AG04450 (cell line): ENCODE measurements at regions of chr12 and their contacts with region 1.

Region 1: DNA sequence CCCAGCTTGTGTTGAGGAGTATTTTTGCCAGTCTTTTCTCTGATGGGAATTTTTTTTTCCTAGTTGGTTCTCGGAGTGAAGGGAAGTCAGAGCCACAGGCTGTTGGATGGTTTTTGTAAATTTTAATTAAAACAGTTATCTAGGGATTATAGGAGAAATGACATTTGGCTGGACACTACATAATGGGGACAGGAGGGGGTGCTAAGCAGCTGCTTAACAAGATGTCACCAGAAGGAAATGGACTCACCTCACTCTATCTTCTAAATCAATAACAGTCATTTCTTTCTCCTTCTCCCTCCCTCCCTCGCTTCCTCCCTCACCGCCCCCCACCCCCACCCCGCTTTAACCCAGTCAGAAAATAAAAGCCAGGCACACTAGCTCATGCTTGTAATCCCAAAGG is 93.4 kb upstream of the TMEM233 start:
- DNase-seq: no peak
- H3K4me3 ChIP-seq: no peak overlapping the region
- H3K27ac ChIP-seq: no peak overlapping the region
- H3K27me3 ChIP-seq: no peaks in the 10 kb centered on the region
- CTCF ChIP-seq: no peak

Region 2: DNA sequence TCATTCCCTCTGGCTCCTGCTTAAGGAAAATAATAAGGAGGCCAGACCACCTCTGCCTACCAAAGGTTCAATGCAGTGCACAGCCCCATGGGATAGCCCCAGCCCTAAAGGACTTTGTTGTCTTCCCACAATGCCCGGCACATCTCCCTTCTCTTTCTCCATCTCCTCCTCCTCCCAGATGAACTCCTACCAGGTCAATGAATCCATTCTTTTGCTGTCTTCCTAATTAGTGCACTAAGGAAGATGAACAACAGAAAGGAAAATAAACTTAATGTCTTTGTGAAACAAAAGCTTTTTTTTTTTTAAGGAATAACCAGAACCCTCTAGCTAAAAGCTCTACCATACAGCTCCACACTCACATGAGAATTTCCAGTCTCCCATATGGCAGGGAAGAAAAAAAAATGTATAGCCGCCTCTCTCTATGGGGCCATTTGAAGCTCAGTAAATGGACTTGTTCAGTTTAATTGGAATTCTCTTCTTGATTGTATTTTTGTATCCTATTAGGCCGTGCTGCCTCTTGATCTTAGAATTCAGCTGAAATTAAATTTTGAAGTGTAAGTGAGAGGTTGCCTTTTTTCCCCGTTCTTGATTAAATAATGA is 363.3 kb before region 1 on chr12:
- CTCF ChIA-PET with region 1: no interaction called
- POLR2A ChIA-PET with region 1: no interaction called
- DNase-seq: no peak
- H3K4me3 ChIP-seq: no peak overlapping the region
- H3K27ac ChIP-seq: no peak overlapping the region
- H3K27me3 ChIP-seq: no peaks in the 10 kb centered on the region
- CTCF ChIP-seq: no peak

Region 3: DNA sequence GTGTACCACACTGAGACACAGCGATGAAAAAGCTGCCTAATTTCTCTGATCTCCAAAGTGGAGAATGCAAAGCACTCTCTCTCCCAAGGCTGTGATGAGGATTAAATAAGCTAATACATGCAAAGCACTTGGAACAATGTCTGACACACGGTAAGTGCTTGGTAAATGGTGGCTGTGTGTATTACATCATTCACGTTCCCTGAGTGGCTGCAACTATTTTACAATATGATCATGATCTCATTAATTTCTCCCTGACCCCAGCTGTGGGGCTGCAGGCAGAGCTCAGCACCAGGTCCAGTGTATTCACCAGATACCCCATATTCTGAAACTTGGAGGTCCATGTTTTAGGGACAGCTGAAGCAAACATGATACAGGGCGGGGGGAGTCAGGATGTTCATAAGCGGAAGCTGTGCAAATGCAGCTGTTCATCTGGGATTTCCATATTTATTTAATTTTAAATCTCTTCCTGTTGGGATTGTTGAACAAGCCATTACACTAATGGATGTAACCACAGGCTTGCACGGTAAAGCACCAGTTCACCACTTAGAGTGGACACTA is 59.3 kb before region 1 on chr12:
- CTCF ChIA-PET with region 1: interaction called, 11 read pairs
- POLR2A ChIA-PET with region 1: no interaction called
- DNase-seq: no peak
- H3K4me3 ChIP-seq: no peak overlapping the region
- H3K27ac ChIP-seq: no peak overlapping the region
- H3K27me3 ChIP-seq: no peaks in the 10 kb centered on the region
- CTCF ChIP-seq: no peak

Region 4: GRCh38 chr12:119468296-119468695 is 31.9 kb before region 1 on chr12:
- CTCF ChIA-PET with region 1: no interaction called
- POLR2A ChIA-PET with region 1: no interaction called
- DNase-seq: no peak
- H3K4me3 ChIP-seq: no peak overlapping the region
- H3K27ac ChIP-seq: no peak overlapping the region
- H3K27me3 ChIP-seq: no peaks in the 10 kb centered on the region
- CTCF ChIP-seq: no peak